ENCODE measurements at regions of chr3 and their contacts with region 1.

Region 1: GRCh38 chr3:64405211-64405835 is 180.1 kb upstream of the PRICKLE2 start:
- DNase-seq: peak; percentile 67
- ATAC-seq: peak; percentile 82
- H3K4me3 ChIP-seq: no peak overlapping the region
- H3K27ac ChIP-seq: no peak overlapping the region; the same call in 1 of the 2 replicates
- H3K4me1 ChIP-seq: peaks cover 7% of the 10 kb centered on the region; the same call in 1 of the 2 replicates
- H3K27me3 ChIP-seq: no peaks in the 10 kb centered on the region
- CTCF ChIP-seq: no peak
- POLR2A ChIP-seq: no peak
- RAD21 ChIP-seq: no peak

Region 2: DNA sequence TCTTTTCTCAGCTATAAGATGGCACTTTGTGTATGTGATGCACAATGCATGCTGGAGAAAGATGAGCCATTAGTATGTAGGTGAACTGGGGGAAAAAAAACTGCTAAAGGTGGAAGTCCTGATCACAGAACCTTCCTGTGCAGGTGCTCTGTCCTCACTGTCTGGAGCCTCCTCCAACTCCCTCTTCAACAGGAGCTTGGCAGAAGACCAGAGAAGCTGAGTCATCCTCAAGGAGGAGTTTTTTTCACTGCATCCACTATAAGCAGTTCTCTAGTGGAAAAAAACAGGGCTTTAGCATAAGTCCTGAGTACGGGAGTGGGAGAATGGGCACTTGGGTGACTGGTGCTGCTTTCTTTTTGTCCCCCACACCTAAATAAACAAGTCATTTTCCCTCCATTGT is 1361.7 kb before region 1 on chr3:
- CTCF ChIA-PET with region 1: no interaction called
- POLR2A ChIA-PET with region 1: no interaction called
- dilution Hi-C with region 1: no loop called
- in situ Hi-C with region 1: no loop called
- intact Hi-C with region 1: no loop called
- DNase-seq: no peak
- ATAC-seq: no peak
- H3K4me3 ChIP-seq: no peak overlapping the region
- H3K27ac ChIP-seq: no peak overlapping the region
- H3K4me1 ChIP-seq: no peaks in the 10 kb centered on the region
- H3K27me3 ChIP-seq: no peaks in the 10 kb centered on the region
- CTCF ChIP-seq: no peak
- POLR2A ChIP-seq: no peak
- RAD21 ChIP-seq: no peak

Region 3: DNA sequence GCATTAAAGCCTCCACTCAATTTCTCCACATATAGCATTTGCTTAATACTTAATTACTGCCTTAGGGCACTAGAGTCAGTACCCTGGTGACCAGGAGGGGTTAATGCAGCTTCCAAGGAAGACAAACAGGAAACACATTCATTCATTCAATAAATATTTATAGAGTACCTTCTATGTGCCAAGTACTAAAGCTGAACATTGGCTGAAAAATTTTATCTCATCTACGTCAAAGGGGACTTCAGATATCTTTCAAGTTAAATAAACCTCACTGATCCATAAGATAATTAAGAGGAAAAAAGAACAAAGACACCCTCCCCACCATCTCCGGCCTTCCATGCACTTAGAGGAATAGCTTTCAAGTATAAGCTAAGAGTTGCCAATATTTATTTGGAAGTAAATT is 23.2 kb before region 1 on chr3:
- CTCF ChIA-PET with region 1: interaction called, 3 read pairs
- POLR2A ChIA-PET with region 1: no interaction called
- dilution Hi-C with region 1: no loop called
- in situ Hi-C with region 1: no loop called
- intact Hi-C with region 1: loop called (anchors 1 kb)
- DNase-seq: peak; percentile 64
- ATAC-seq: peak; percentile 77
- H3K4me3 ChIP-seq: no peak overlapping the region
- H3K27ac ChIP-seq: peak overlapping the region; percentile 71; the same call in 1 of the 2 replicates
- H3K4me1 ChIP-seq: peaks cover 9% of the 10 kb centered on the region
- H3K27me3 ChIP-seq: no peaks in the 10 kb centered on the region
- CTCF ChIP-seq: no peak
- POLR2A ChIP-seq: no peak
- RAD21 ChIP-seq: no peak

Region 4: GRCh38 chr3:64462203-64462602 is 56.9 kb after region 1 on chr3:
- CTCF ChIA-PET with region 1: no interaction called
- POLR2A ChIA-PET with region 1: no interaction called
- dilution Hi-C with region 1: no loop called
- in situ Hi-C with region 1: no loop called
- intact Hi-C with region 1: loop called (anchors 2 kb)
- DNase-seq: peak; percentile 93
- ATAC-seq: peak; percentile 73
- H3K4me3 ChIP-seq: peak overlapping the region; percentile 28; the same call in 1 of the 2 replicates
- H3K27ac ChIP-seq: peak overlapping the region; percentile 95
- H3K4me1 ChIP-seq: peaks cover 21% of the 10 kb centered on the region
- H3K27me3 ChIP-seq: no peaks in the 10 kb centered on the region
- CTCF ChIP-seq: no peak
- POLR2A ChIP-seq: no peak
- RAD21 ChIP-seq: no peak

Region 5: GRCh38 chr3:64484289-64484992 is 79.1 kb after region 1 on chr3:
- CTCF ChIA-PET with region 1: no interaction called
- POLR2A ChIA-PET with region 1: no interaction called
- dilution Hi-C with region 1: no loop called
- in situ Hi-C with region 1: no loop called
- intact Hi-C with region 1: no loop called
- DNase-seq: peak; percentile 80
- ATAC-seq: peak; percentile 100
- H3K4me3 ChIP-seq: no peak overlapping the region
- H3K27ac ChIP-seq: no peak overlapping the region
- H3K4me1 ChIP-seq: no peaks in the 10 kb centered on the region
- H3K27me3 ChIP-seq: no peaks in the 10 kb centered on the region
- CTCF ChIP-seq: peak; percentile 92
- POLR2A ChIP-seq: 0 out of 2 replicates have a peak, but pooled peaks have one; percentile 34
- RAD21 ChIP-seq: peak; percentile 99